Activated T-helper 2 cell treated with anti-CD3 and anti-CD28 coated beads, Interferon-gamma antibody, Interleukin-2, Interleukin-4, amounts not matched to agents 10 μg/mL and 5 μg/mL and 100 μg/mL, durations not matched to agents 14 hours and 24 hours and 36 hours (primary cell): ENCODE measurements at regions of chr5 and their contacts with region 1.

Region 1: GRCh38 chr5:81194633-81195333 is 38.3 kb upstream of the CKMT2 start:
- DNase-seq: peak; percentile 73
- H3K4me3 Mint-ChIP-seq: no peak overlapping the region
- H3K27ac Mint-ChIP-seq: no peak overlapping the region
- H3K4me1 Mint-ChIP-seq: peaks cover 6% of the 10 kb centered on the region
- H3K27me3 Mint-ChIP-seq: no peaks in the 10 kb centered on the region

Region 2: GRCh38 chr5:80487829-80488721 is 706.7 kb before region 1 on chr5 and contains the start of gene FAM151B:
- intact Hi-C with region 1: loop called (anchors 10 kb)
- DNase-seq: peak; percentile 71
- H3K4me3 Mint-ChIP-seq: peak within 1 kb of the TSS; percentile 83
- H3K27ac Mint-ChIP-seq: no peak within 1 kb of the TSS
- H3K4me1 Mint-ChIP-seq: peaks cover 19% of the 10 kb centered on the region
- H3K27me3 Mint-ChIP-seq: peaks cover 24% of the 10 kb centered on the region
- total RNA-seq, gene FAM151B: 0.43 and 0.76 TPM in 2 replicates

Region 3: DNA sequence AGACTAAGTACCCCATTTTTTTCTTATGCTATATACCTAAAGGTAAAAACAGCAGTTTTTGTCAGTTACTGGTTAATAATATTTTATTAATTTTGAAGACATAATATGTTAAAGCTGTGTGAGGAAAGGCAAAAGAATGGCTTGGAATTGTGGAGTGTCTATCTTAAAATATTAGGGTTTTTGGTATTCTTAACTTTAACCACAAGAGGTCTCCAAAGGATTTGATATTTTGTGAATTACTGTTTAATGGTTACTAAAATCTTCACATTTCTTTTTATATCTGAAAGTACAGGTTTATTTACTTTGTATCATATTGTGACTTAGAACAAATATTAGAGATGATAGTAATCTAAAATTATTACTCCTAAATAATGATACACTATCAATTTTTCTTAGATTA is 508.0 kb before region 1 on chr5:
- intact Hi-C with region 1: loop called (anchors 1 kb)
- DNase-seq: no peak
- H3K4me3 Mint-ChIP-seq: no peak overlapping the region
- H3K27ac Mint-ChIP-seq: no peak overlapping the region
- H3K4me1 Mint-ChIP-seq: peaks cover 27% of the 10 kb centered on the region
- H3K27me3 Mint-ChIP-seq: no peaks in the 10 kb centered on the region

Region 4: GRCh38 chr5:81363093-81364080 is 168.6 kb after region 1 on chr5:
- intact Hi-C with region 1: no loop called
- DNase-seq: no peak
- H3K4me3 Mint-ChIP-seq: no peak overlapping the region
- H3K27ac Mint-ChIP-seq: no peak overlapping the region
- H3K4me1 Mint-ChIP-seq: no peaks in the 10 kb centered on the region
- H3K27me3 Mint-ChIP-seq: peaks cover 16% of the 10 kb centered on the region